PC-9 (cell line): ENCODE measurements at regions of chr3 and their contacts with region 1.

Region 1: DNA sequence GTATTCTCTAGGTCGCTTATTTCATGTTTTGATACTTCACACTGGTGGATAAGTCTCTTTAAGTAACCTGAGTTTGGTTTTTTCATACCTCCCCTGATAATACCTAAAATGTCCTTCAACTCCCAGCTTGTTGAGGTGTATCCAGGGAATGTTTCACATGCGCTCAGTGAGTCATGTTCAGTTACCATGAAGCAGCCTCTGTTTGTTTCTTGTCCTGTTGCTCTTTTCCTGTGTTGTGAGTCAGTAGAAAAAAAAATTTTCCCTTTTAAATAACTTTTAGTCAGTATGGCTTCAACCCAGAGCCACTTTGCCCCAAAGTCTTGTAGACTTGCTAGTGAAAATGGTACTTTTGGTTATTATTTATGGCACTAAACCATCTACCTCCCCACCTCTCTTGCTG is 278.4 kb upstream of the ZPLD1 start:
- DNase-seq: peak; percentile 60 to 85
- H3K4me3 ChIP-seq: no peak overlapping the region
- H3K27ac ChIP-seq: 0 out of 2 replicates have a peak overlapping the region, but pooled peaks have one; percentile 13
- H3K4me1 ChIP-seq: peaks cover 25% of the 10 kb centered on the region
- H3K27me3 ChIP-seq: no peaks in the 10 kb centered on the region
- CTCF ChIP-seq: no peak

Region 2: DNA sequence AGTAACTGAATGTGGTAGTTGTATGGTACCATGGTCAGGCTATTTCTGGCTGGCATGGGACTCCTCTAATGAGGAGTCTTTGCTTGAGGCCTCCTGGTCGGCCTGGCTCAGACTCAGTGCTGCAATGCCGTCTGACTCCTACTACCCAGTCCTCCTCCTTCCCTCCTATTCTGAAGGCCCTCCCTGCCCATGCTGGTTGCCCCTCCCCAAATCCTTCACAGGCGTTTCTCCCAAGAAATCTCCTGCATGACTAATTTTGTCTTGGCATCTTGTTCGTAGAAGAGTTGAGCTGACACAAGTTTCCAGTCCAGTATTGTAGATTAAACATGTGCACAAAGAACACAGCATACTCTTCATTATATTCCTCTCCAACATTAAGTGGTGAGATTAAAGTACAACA is 191.6 kb before region 1 on chr3:
- CTCF ChIA-PET with region 1: no interaction called
- POLR2A ChIA-PET with region 1: no interaction called
- intact Hi-C with region 1: no loop called
- DNase-seq: no peak
- H3K4me3 ChIP-seq: no peak overlapping the region
- H3K27ac ChIP-seq: no peak overlapping the region
- H3K4me1 ChIP-seq: 0 out of 2 replicates have a peak, but pooled peaks cover 4% of the 10 kb centered on the region
- H3K27me3 ChIP-seq: no peaks in the 10 kb centered on the region
- CTCF ChIP-seq: no peak

Region 3: DNA sequence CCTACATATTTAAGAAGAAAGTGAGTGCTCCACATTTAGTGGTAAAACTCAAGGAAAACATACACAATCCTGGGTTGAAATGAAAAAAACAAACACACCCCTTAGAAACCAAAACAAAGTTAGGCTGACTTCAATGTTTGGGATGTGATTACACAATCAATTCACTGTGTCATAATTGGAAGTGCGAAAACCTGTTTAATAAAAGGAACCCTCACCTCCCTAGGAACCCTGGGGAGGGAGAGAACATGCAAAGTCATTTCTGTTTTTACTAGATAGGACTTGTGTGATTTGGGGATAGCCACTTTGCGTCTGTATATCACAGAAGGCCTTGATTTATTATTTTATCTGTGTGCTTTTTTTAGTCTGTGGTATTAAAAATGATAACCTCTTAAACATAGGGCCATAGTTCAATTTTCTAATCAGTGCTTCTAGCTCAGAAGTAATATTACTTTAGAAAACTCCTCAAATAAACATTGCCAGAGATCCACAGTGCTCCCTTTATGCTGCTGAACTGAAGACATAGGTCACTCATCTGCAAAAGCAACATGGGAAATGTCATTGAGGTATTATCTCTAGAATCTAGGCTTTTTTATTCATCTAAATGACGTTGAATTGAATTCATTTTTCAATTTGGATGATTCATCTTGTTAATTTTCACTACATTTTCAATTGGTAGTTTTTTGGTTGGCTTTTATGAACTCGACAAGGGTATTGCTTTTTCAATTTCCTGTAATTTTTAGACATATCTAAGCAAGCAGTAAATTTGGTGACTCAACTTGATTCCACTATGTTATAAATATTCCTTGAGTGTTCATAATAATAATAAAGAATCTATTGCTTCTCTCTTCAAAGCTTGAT is 31.9 kb before region 1 on chr3:
- CTCF ChIA-PET with region 1: no interaction called
- POLR2A ChIA-PET with region 1: no interaction called
- intact Hi-C with region 1: loop called (anchors 1 kb)
- DNase-seq: peak in 1 of 2 experiments; percentile 85
- H3K4me3 ChIP-seq: no peak overlapping the region
- H3K27ac ChIP-seq: peak overlapping the region; percentile 53
- H3K4me1 ChIP-seq: peaks cover 17% of the 10 kb centered on the region
- H3K27me3 ChIP-seq: no peaks in the 10 kb centered on the region
- CTCF ChIP-seq: no peak

Region 4: DNA sequence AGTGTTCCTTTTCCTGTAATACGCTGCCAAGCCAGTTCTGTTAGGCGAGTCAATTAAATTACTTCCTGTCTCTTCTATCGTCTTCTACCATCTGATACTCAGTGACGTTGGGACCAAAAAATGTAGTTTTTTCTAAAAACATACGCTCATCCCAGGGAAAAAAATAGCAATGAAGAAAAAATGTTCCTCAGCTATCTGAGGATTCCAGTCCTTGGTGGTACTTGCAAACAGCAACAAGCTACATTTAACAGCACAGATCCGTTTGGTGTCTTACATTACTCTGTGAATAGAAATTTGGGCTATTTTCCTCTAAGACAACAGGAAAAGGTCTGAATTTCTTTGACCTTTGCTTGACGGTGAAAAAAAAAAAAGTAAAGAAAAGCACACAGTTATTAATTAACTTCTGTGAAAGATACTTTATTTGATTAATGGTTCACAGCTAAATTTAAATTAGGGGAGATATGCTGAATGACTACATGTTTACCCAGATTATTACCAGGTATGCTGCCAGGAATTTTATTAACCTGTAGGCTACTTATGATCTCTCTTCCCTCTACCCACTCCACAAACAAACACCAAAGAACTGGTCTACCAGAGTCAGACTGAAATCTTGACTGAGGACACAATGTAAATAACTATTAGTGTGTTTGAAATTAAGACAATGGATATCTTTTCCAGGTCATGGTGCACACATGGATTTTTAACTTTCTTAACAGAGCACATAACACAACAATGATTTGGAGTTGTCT is 24.0 kb after region 1 on chr3:
- CTCF ChIA-PET with region 1: no interaction called
- POLR2A ChIA-PET with region 1: no interaction called
- intact Hi-C with region 1: no loop called
- DNase-seq: no peak
- H3K4me3 ChIP-seq: no peak overlapping the region
- H3K27ac ChIP-seq: no peak overlapping the region
- H3K4me1 ChIP-seq: peaks cover 18% of the 10 kb centered on the region
- H3K27me3 ChIP-seq: no peaks in the 10 kb centered on the region
- CTCF ChIP-seq: no peak